Right ventricle myocardium inferior (tissue), 1 donor: ENCODE measurements at regions of chr17 and their contacts with region 1.

Region 1: GRCh38 chr17:75749545-75750389 is 15.2 kb downstream of the GALK1 start:
- DNase-seq: peak; percentile 95
- ATAC-seq: peak; percentile 68

Region 2: GRCh38 chr17:75679706-75680442 is 69.9 kb before region 1 on chr17:
- intact Hi-C with region 1: loop called (anchors 2 kb)
- DNase-seq: no peak
- ATAC-seq: peak; percentile 62

Region 3: GRCh38 chr17:75799398-75799797 is 49.6 kb after region 1 on chr17:
- intact Hi-C with region 1: no loop called
- DNase-seq: no peak
- ATAC-seq: no peak